ENCODE measurements at regions of chr15 and their contacts with region 1.

Region 1: GRCh38 chr15:99507504-99508310 is 58.1 kb upstream of the MEF2A start:
- DNase-seq: no peak
- ATAC-seq: no peak
- H3K4me3 Mint-ChIP-seq: no peak overlapping the region
- H3K27ac Mint-ChIP-seq: no peak overlapping the region
- H3K4me1 Mint-ChIP-seq: peaks cover 32% of the 10 kb centered on the region
- H3K27me3 Mint-ChIP-seq: no peaks in the 10 kb centered on the region

Region 2: GRCh38 chr15:99424978-99425656 is 82.6 kb before region 1 on chr15:
- CTCF ChIA-PET with region 1: no interaction called
- POLR2A ChIA-PET with region 1: no interaction called
- intact Hi-C with region 1: loop called (anchors 5 kb)
- DNase-seq: peak; percentile 79
- ATAC-seq: peak; percentile 99
- H3K4me3 Mint-ChIP-seq: peak overlapping the region; percentile 35
- H3K27ac Mint-ChIP-seq: peak overlapping the region; percentile 90
- H3K4me1 Mint-ChIP-seq: peaks cover 62% of the 10 kb centered on the region
- H3K27me3 Mint-ChIP-seq: peaks cover 2% of the 10 kb centered on the region

Region 3: GRCh38 chr15:99442252-99442897 is 65.3 kb before region 1 on chr15:
- CTCF ChIA-PET with region 1: no interaction called
- POLR2A ChIA-PET with region 1: no interaction called
- intact Hi-C with region 1: loop called in 1 of 2 experiments (anchors 2 kb)
- DNase-seq: peak; percentile 23
- ATAC-seq: peak; percentile 64
- H3K4me3 Mint-ChIP-seq: no peak overlapping the region
- H3K27ac Mint-ChIP-seq: peak overlapping the region; percentile 3
- H3K4me1 Mint-ChIP-seq: peaks cover 57% of the 10 kb centered on the region
- H3K27me3 Mint-ChIP-seq: no peaks in the 10 kb centered on the region

Region 4: DNA sequence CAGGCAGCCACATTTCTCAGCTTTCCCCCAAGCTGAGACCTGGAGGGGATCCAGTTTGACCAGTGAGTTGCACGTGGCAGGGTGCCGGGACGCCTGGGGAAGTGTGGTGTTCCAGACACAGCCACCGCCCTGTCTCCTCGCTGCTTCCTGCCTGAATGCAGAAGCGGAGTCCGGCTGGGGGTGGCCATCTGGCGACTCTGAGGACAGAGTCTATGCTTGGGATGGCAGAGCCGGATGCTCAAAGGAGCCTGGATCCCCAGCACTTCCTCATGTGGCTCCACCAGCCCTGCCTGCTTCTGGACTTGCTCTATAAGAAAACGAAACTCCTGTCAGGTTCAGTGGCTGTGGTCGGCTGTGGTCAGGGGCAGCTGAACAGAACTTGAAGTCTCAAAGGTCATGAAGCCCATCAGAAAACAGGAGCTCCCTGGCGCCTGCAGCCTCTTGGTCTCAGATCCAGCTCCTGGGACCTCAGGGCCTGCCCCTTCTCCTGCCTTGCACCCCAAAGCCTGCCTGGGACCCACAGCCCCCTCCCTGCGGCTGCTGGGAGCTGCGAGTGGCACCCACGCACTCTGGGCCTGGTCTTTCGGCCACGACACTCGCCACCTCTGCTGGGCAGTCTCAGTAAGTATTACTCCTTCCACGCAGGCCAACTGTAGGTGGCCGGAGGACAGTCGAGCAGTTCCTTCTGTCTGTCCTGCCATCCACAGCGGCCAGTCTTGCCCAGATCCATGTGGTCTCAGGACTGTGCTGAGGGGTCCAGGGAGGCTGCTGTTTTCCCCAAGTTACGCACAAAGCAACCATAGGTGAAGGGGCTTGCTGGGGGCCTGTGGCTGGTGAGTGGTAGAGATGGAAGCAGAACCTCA is 54.7 kb before region 1 on chr15:
- CTCF ChIA-PET with region 1: no interaction called
- POLR2A ChIA-PET with region 1: no interaction called
- intact Hi-C with region 1: loop called in 1 of 2 experiments (anchors 5 kb)
- DNase-seq: peak; percentile 12
- ATAC-seq: no peak
- H3K4me3 Mint-ChIP-seq: no peak overlapping the region
- H3K27ac Mint-ChIP-seq: no peak overlapping the region
- H3K4me1 Mint-ChIP-seq: peaks cover 26% of the 10 kb centered on the region
- H3K27me3 Mint-ChIP-seq: no peaks in the 10 kb centered on the region

Region 5: DNA sequence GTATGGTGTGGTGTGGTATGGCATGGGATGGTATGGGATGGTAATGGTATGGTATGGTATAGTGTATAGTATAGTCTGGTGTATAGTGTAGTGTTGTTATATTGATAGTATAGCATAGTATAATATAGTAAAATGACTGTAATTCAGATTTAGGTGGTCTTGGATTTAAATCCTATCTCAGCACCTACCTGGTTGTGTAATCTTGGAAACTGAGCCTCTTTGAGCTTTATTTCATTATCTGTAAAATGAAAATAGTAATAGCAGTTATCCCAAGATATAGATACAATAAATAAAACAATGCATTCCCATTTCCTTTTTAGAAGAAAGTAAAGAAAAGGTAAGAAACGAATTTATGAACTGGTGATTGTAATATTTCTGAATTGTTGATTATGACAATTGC is 30.6 kb after region 1 on chr15:
- CTCF ChIA-PET with region 1: no interaction called
- POLR2A ChIA-PET with region 1: no interaction called
- intact Hi-C with region 1: no loop called
- DNase-seq: no peak
- ATAC-seq: no peak
- H3K4me3 Mint-ChIP-seq: no peak overlapping the region
- H3K27ac Mint-ChIP-seq: no peak overlapping the region
- H3K4me1 Mint-ChIP-seq: no peaks in the 10 kb centered on the region
- H3K27me3 Mint-ChIP-seq: no peaks in the 10 kb centered on the region